Naive thymus-derived CD4-positive, alpha-beta T cell (primary cell): ENCODE measurements at regions of chr15 and their contacts with region 1.

Region 1: GRCh38 chr15:23642413-23643044 is 5.1 kb downstream of the MAGEL2 start:
- DNase-seq: peak in 5 of 9 donors; percentile 9 to 32 (median 18)
- ATAC-seq: no peak
- H3K4me3 ChIP-seq: no peak overlapping the region
- H3K4me3 Mint-ChIP-seq: no peak overlapping the region
- H3K27ac ChIP-seq: no peak overlapping the region
- H3K27ac Mint-ChIP-seq: no peak overlapping the region
- H3K4me1 ChIP-seq: no peaks in the 10 kb centered on the region
- H3K4me1 Mint-ChIP-seq: no peaks in the 10 kb centered on the region
- H3K27me3 ChIP-seq: no peaks in the 10 kb centered on the region
- H3K27me3 Mint-ChIP-seq: peaks cover 0 to 20% (median 6%) of the 10 kb centered on the region in 5 donors

Region 2: GRCh38 chr15:23734862-23735261 is 92.3 kb after region 1 on chr15:
- CTCF ChIA-PET with region 1: no interaction called
- POLR2A ChIA-PET with region 1: no interaction called
- intact Hi-C with region 1: no loop called
- DNase-seq: no peak
- ATAC-seq: no peak
- H3K4me3 ChIP-seq: no peak overlapping the region
- H3K4me3 Mint-ChIP-seq: no peak overlapping the region
- H3K27ac ChIP-seq: no peak overlapping the region
- H3K27ac Mint-ChIP-seq: no peak overlapping the region
- H3K4me1 ChIP-seq: no peaks in the 10 kb centered on the region
- H3K4me1 Mint-ChIP-seq: no peaks in the 10 kb centered on the region
- H3K27me3 ChIP-seq: no peaks in the 10 kb centered on the region
- H3K27me3 Mint-ChIP-seq: no peaks in the 10 kb centered on the region

Region 3: GRCh38 chr15:23877502-23878412 is 235.2 kb after region 1 on chr15:
- CTCF ChIA-PET with region 1: no interaction called
- POLR2A ChIA-PET with region 1: no interaction called
- intact Hi-C with region 1: loop called in 1 of 2 experiments (anchors 1 kb)
- DNase-seq: peak in 1 of 9 donors; percentile 24
- ATAC-seq: no peak
- H3K4me3 ChIP-seq: no peak overlapping the region
- H3K4me3 Mint-ChIP-seq: no peak overlapping the region
- H3K27ac ChIP-seq: no peak overlapping the region
- H3K27ac Mint-ChIP-seq: no peak overlapping the region
- H3K4me1 ChIP-seq: no peaks in the 10 kb centered on the region
- H3K4me1 Mint-ChIP-seq: peaks cover 0 to 12% (median 0%) of the 10 kb centered on the region in 7 donors
- H3K27me3 ChIP-seq: no peaks in the 10 kb centered on the region
- H3K27me3 Mint-ChIP-seq: peaks cover 0 to 9% (median 4%) of the 10 kb centered on the region in 5 donors

Region 4: DNA sequence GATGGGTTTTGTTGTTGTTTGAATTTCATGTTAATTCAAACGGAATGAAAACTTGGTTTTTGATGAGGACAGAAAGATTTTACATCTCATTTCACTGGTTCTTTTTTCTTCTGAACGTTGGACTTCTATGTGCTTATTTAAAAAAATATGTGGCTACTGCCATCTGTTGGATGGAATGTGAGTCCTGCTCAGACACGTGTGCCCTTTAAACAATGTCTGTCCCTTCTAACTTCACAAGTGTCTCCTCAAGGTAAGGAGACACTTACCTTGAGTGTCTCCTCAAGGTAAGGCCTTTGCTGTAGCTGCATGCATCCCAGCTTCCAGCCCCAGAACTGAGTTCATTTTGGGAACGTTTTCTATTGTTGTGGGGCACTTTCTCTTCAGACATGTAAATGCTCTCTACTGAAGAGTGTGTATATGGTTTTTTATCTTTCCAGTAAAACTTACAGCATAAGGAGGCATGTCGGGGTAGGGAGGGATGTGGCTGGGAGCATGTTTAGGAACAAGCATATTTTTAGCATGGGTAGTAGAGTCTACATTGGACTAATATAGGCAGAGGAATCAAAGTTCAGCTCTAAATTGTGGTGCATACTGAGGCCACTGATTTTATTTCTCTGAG is 1859.4 kb after region 1 on chr15:
- CTCF ChIA-PET with region 1: interaction called, 4 read pairs
- POLR2A ChIA-PET with region 1: no interaction called
- intact Hi-C with region 1: loop called (anchors 1 to 5 kb)
- DNase-seq: peak in 5 of 9 donors; percentile 10 to 19 (median 14)
- ATAC-seq: no peak
- H3K4me3 ChIP-seq: no peak overlapping the region
- H3K4me3 Mint-ChIP-seq: no peak overlapping the region
- H3K27ac ChIP-seq: no peak overlapping the region
- H3K27ac Mint-ChIP-seq: no peak overlapping the region
- H3K4me1 ChIP-seq: no peaks in the 10 kb centered on the region
- H3K4me1 Mint-ChIP-seq: no peaks in the 10 kb centered on the region
- H3K27me3 ChIP-seq: no peaks in the 10 kb centered on the region
- H3K27me3 Mint-ChIP-seq: peaks cover 0 to 17% (median 6%) of the 10 kb centered on the region in 5 donors